ENCODE measurements at regions of chr6 and their contacts with region 1.

Region 1: DNA sequence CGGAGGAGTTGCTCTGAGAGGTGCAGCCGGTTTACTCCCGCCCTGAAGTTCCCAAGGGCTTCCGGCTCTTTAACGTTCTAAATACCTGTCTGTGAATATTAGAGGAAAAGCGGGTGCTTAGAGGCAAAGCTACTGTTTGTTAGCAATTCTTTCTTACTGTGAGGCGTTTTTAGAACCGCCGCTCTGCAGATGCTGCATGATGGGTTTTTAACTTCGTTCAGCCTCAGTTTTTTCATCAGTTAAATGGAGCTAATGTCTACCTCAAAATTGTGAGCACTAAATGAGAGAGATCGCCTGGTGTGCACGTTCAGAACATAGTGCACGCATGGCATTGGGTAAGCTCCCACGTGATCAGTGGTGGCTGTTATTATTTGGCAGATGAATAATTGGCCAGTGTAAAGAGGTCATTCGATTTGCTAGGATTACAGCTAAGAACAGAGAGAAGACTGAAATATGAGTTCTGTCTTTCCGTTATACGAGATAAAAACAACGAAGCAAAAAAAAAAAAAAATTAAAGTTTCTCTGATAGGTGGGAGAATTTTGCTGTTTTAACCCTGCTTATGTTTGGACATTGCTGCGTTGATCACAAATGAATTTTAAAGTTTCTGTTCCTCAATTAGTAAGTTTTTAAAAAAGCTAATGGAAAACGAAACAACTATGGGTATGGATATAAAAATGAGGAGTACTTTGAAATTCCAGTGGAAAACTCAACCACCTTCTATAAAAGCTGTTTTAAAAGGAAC is 660 bp upstream of the TFB1M start:
- DNase-seq: peak; percentile 69
- H3K4me3 Mint-ChIP-seq: peak overlapping the region; percentile 91
- H3K27ac Mint-ChIP-seq: peak overlapping the region; percentile 96
- H3K4me1 Mint-ChIP-seq: peaks cover 46% of the 10 kb centered on the region
- H3K27me3 Mint-ChIP-seq: no peaks in the 10 kb centered on the region

Region 2: DNA sequence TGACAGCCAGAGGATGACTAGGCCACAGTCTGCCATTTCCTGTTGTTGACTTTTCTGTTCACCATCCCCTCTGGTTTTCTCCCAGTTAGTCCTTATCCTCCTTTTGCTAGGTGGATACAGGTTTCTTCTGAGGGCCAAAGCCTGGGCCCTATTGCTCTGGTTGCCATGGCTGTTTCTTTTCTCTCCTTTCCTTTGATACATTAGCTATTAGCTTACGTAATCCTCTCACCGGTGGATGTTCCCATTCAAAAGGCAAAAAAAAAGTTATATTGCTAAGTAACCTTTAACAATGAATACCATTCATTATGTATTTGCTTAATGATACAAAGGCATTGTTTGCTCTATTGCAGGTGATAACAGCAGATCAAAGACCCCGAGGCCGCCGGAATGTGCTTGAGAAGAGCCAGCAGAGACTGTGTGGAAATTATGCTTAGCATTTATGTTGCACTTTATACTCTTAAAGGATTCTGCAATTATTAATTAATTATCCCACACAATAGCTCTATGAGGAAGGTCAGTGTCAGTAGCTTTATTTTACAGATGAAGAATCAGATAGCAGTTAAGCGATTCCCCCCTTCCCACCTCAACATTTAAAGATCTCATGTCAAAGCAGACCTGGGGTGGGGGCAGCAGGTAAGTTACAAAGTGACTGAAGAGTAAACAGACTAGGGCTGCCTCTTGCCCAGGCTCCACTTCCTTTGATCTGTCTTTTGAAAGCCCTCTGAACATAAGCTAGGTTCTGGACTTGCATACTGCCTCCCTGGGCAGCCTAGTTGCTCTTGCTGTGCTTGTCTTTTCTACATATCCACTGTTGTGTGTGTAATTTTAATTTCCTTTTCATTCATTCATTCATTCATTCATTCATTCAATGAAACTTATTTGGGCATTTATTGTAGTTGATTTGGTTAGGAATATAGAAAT is 13.9 kb after region 1 on chr6:
- CTCF ChIA-PET with region 1: interaction called, 11 read pairs
- POLR2A ChIA-PET with region 1: no interaction called
- DNase-seq: no peak
- H3K4me3 Mint-ChIP-seq: no peak overlapping the region
- H3K27ac Mint-ChIP-seq: no peak overlapping the region
- H3K4me1 Mint-ChIP-seq: peaks cover 29% of the 10 kb centered on the region
- H3K27me3 Mint-ChIP-seq: no peaks in the 10 kb centered on the region

Region 3: GRCh38 chr6:155400654-155400965 is 85.7 kb after region 1 on chr6:
- CTCF ChIA-PET with region 1: no interaction called
- POLR2A ChIA-PET with region 1: no interaction called
- DNase-seq: no peak
- H3K4me3 Mint-ChIP-seq: no peak overlapping the region
- H3K27ac Mint-ChIP-seq: no peak overlapping the region
- H3K4me1 Mint-ChIP-seq: no peaks in the 10 kb centered on the region
- H3K27me3 Mint-ChIP-seq: no peaks in the 10 kb centered on the region